ENCODE measurements at regions of chr3 and their contacts with region 1.

Region 1: DNA sequence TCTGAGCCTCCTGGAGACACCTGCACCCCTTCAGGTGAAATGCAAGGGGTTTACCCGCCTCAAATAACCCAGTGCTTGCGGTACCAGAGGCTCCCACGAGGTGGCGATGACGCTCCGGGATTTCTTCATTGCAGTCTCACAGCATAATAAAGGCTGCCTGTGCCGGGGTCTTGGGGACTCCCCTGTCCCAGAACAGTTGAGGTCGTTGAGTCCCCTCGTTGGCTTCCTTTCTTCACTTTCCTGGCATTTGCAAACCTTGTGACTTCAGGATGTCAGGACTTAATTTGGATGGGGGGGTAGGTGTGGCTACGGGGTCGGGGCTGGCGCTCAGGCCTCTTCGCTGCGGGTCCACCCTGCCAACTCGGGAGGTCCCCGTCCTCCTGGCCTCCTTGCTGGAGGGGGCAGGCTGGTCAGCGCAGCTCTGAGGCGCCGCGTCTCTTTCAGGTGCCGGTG is 1.3 kb downstream of the GNAT1 start:
- DNase-seq: peak; percentile 69
- H3K4me3 ChIP-seq: no peak overlapping the region
- H3K27ac ChIP-seq: no peak overlapping the region
- H3K4me1 ChIP-seq: peaks cover 5% of the 10 kb centered on the region
- H3K27me3 ChIP-seq: peaks cover 11 to 13% of the 10 kb centered on the region in 2 experiments
- CTCF ChIP-seq: peak; percentile 87 to 92
- POLR2A ChIP-seq: no peak

Region 2: GRCh38 chr3:50112462-50112861 is 80.3 kb before region 1 on chr3:
- CTCF ChIA-PET with region 1: no interaction called
- POLR2A ChIA-PET with region 1: no interaction called
- dilution Hi-C with region 1: loop called (anchors 10 kb)
- intact Hi-C with region 1: no loop called
- DNase-seq: no peak
- H3K4me3 ChIP-seq: no peak overlapping the region
- H3K27ac ChIP-seq: no peak overlapping the region
- H3K4me1 ChIP-seq: no peaks in the 10 kb centered on the region
- H3K27me3 ChIP-seq: no peaks in the 10 kb centered on the region
- CTCF ChIP-seq: no peak
- POLR2A ChIP-seq: no peak

Region 3: DNA sequence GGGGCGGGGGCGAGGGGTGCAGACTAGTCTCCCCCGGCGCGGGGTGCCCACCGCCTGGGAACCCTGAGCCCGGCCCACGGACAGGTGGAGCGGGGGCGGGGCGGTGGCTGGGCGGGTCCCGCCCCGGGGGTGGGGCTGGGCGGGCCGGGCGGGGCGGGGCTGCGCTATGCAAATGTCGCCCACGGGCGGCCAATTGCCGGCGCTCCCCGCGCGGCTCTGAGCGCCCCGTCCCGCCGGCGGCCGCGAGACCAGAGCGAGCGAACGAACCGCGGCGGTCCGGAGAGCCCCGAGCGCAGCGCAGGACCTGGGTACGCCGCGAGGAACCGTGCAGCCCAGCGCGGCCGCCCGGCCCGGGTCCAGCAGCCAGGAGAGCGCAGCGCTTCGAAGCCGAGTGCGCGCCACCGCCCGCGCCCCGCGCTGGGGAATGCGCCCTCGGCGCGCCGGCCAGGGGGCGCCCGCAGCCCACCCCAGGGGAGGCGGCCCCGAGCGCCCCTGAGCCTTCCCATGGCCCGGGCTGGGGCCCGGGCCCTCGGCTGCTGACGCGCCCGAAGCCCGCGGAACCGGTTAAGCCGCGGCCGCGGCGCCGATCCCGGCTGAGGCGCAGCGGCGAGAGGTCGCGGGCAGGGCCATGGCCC is 37.8 kb before region 1 on chr3 and contains the start of gene SEMA3F:
- CTCF ChIA-PET with region 1: interaction called, 36 read pairs
- POLR2A ChIA-PET with region 1: interaction called, 4 read pairs
- dilution Hi-C with region 1: no loop called
- intact Hi-C with region 1: loop called (anchors 1 kb)
- DNase-seq: peak; percentile 72
- H3K4me3 ChIP-seq: peak within 1 kb of the TSS; percentile 29 to 77 (median 77)
- H3K27ac ChIP-seq: peak within 1 kb of the TSS; percentile 40
- H3K4me1 ChIP-seq: peaks cover 50% of the 10 kb centered on the region
- H3K27me3 ChIP-seq: no peaks in the 10 kb centered on the region
- CTCF ChIP-seq: peak; percentile 19 to 26
- POLR2A ChIP-seq: peak; percentile 86
- total RNA-seq, gene SEMA3F: 99.1 and 143 TPM in 2 replicates

Region 4: DNA sequence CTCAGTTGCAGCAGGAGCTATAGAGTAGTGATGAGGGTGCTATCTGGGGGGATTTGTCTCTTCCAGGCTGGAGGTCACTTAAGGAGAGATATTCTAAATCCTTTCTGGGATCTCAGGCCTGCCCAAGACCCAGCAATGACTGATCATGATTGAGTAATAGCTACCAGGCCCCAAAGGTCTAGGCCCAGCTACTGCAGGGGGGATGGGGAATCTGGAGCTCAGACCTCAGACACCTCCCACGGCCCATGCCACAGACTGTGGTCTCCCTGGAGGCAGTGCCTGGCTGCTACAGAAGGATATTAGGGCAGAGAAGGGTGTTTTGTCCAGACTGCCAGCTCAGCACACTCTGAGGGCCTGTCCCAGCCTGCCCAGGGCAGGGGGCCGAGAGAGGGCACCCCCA is 19.2 kb after region 1 on chr3:
- CTCF ChIA-PET with region 1: interaction called, 55 read pairs
- POLR2A ChIA-PET with region 1: no interaction called
- dilution Hi-C with region 1: no loop called
- intact Hi-C with region 1: no loop called
- DNase-seq: no peak
- H3K4me3 ChIP-seq: no peak overlapping the region
- H3K27ac ChIP-seq: no peak overlapping the region
- H3K4me1 ChIP-seq: no peaks in the 10 kb centered on the region
- H3K27me3 ChIP-seq: no peaks in the 10 kb centered on the region
- CTCF ChIP-seq: no peak
- POLR2A ChIP-seq: no peak

Region 5: DNA sequence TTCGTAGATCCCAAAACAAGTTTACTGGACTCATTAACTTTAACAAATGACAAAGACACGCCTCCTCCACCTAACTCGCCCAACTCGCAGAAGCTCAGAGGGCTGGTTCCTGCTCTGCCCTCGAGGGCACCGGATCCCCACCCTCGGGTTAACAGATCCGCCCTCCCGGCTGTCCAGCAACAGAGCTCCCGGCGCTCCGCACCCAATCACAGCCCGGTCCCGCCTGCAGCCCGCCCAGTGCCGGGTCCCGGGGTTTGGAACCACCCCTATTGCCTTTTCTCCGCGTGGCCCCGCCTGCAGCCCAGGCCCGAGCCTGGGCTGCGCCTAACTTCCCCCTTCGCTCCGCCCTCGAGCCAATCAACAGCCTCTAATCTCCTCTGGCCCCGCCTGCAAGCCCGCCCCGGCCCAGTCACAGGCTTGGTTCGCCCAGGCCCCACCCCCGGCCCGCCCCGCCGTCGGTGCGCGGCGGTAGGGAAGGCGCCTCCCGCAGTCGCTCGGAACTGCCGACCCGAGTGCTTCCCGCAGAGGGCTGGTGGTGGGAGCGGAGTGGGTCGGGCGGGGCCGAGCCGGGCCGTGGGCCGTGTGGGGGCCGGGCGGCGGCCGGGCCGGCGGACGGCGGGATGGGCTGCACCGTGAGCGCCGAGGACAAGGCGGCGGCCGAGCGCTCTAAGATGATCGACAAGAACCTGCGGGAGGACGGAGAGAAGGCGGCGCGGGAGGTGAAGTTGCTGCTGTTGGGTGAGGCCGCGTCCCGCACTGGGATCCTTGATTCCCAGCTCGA is 43.2 kb after region 1 on chr3 and contains the start of gene GNAI2:
- CTCF ChIA-PET with region 1: interaction called, 314 read pairs
- POLR2A ChIA-PET with region 1: no interaction called
- dilution Hi-C with region 1: no loop called
- intact Hi-C with region 1: no loop called
- DNase-seq: peak; percentile 99
- H3K4me3 ChIP-seq: peak within 1 kb of the TSS; percentile 80 to 88 (median 81)
- H3K27ac ChIP-seq: peak within 1 kb of the TSS; percentile 60
- H3K4me1 ChIP-seq: peaks cover 27% of the 10 kb centered on the region
- H3K27me3 ChIP-seq: no peaks in the 10 kb centered on the region
- CTCF ChIP-seq: no peak
- POLR2A ChIP-seq: peak; percentile 98
- total RNA-seq, gene GNAI2: 767 and 773 TPM in 2 replicates

Region 6: DNA sequence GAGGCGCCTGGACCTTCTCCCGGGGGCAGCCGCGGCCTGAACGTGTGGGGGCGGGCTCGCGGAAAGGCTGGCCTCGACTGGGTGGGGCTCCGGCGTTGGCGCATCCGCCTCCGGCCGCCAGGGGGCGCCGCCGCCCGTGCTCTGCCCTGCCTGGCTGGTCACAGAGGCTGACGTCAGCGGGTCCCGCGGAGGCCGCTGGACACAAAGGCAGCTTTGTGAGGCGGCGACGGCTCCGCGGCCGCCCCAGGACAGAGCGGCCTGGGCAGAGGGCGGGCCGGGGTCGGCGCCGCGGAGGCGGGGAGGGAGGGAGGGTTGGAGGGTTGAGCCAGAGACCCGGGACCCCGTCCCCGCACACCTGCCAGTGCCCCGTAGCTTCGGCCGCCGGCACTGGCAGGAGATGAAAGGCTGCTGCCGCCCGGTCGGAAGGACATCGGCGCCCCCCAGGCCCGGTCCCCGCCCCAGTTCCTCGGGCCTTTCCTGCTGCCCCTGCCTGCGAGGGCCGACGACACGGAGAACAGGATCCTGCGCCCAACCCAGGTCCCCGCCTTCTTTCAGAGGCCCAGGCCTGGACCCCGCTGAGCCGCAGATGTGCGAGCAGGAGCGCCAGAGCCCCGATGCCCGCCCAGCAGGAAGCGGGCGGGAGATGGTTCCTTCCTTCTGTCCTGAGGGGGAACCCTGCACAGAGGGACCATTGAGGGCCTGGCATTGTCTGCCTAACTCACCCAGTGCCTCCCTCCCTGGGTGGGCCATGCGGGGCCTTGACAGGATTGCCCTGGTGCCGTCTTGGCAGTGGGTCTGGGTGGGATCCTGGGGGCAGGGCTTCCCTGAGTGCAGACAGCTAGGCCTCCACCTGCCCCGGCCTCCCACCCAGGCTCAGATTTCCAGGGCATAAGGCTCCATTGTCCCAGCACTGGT is 67.6 kb after region 1 on chr3:
- CTCF ChIA-PET with region 1: interaction called, 28 read pairs
- POLR2A ChIA-PET with region 1: no interaction called
- dilution Hi-C with region 1: no loop called
- intact Hi-C with region 1: no loop called
- DNase-seq: peak; percentile 93
- H3K4me3 ChIP-seq: peak overlapping the region in 2 of 3 experiments; percentile 25 to 31
- H3K27ac ChIP-seq: peak overlapping the region; percentile 88
- H3K4me1 ChIP-seq: peaks cover 28% of the 10 kb centered on the region
- H3K27me3 ChIP-seq: no peaks in the 10 kb centered on the region
- CTCF ChIP-seq: peak; percentile 97 to 99
- POLR2A ChIP-seq: peak; percentile 88

Region 7: DNA sequence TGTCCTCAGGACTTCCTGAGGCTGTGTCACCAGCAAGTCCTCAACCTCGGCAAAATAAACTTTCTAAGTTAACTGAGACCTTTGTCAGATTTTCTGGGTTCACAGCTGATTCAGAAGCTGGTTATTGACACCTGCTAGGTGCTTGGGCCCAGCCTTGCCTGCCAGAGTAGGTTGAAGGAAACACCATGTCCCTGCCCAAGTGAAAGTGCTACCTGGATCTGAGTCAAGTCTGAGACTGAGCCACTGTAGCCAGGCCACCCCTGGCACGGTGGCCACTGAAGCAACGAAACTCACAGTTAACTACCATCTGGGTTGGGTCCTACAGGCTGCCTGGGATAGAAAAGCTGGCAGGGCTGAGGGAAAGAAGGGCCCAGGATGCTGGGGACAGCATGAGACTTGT is 121.6 kb after region 1 on chr3:
- CTCF ChIA-PET with region 1: no interaction called
- POLR2A ChIA-PET with region 1: no interaction called
- dilution Hi-C with region 1: no loop called
- intact Hi-C with region 1: no loop called
- DNase-seq: no peak
- H3K4me3 ChIP-seq: no peak overlapping the region
- H3K27ac ChIP-seq: no peak overlapping the region
- H3K4me1 ChIP-seq: peaks cover 31% of the 10 kb centered on the region
- H3K27me3 ChIP-seq: no peaks in the 10 kb centered on the region
- CTCF ChIP-seq: no peak
- POLR2A ChIP-seq: no peak

Region 8: DNA sequence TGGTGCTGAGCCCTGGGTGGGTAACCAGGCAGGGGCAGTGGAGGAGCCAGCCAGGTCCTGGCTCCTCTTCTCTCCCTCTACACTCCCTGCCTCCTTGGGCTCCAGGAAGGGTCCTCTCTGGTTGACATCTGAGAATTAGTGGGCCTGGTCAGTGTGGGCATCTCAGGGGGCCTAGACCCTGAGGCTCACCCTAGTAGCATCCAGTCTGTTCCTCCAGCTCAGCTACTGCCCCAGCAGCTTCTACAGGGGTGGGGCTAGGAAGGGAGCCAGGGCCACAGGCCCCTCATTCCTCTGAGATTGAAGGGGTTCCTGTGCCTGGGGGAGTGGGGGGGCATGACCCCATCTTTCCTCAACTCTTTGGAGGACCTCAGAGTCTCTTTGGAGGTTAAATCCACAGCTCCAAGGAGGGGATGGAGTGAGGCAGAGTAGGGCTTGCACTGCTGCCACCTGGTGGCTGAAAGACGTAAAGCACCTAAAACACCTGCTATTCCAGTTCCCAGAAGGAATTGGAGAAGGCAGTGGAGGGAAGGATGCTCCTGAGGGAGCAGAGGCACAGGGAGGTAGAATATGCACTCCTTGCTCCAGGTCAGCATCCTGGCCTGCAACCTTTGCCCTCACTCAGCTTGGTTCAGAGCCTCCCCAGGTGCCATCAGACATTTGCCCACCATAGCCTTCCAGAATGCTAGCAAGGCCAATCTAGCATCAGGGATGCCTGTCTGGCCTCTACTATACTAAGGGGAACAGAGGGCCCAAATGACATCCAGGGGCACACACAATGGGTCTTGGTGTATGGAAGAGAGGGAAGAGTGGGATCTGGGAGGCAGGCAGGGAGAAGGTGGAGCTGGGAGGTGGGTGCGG is 349.7 kb after region 1 on chr3:
- CTCF ChIA-PET with region 1: interaction called, 10 read pairs
- POLR2A ChIA-PET with region 1: no interaction called
- dilution Hi-C with region 1: no loop called
- intact Hi-C with region 1: loop called (anchors 5 kb)
- DNase-seq: peak; percentile 63
- H3K4me3 ChIP-seq: no peak overlapping the region
- H3K27ac ChIP-seq: no peak overlapping the region
- H3K4me1 ChIP-seq: no peaks in the 10 kb centered on the region
- H3K27me3 ChIP-seq: peaks cover 3 to 5% of the 10 kb centered on the region in 2 experiments
- CTCF ChIP-seq: peak; percentile 83 to 87
- POLR2A ChIP-seq: no peak